WTC11 (cell line): ENCODE measurements at regions of chr4 and their contacts with region 1.

Region 1: GRCh38 chr4:6250235-6250983 is 19.2 kb upstream of the WFS1 start:
- DNase-seq: peak; percentile 43
- ATAC-seq: peak; percentile 70
- H3K4me3 Mint-ChIP-seq: peak overlapping the region; percentile 54
- H3K27ac Mint-ChIP-seq: no peak overlapping the region
- H3K4me1 Mint-ChIP-seq: peaks cover 18% of the 10 kb centered on the region
- H3K27me3 Mint-ChIP-seq: peaks cover 6% of the 10 kb centered on the region
- CTCF ChIP-seq: peak; percentile 80

Region 2: GRCh38 chr4:6013564-6013963 is 236.8 kb before region 1 on chr4:
- CTCF ChIA-PET with region 1: no interaction called
- POLR2A ChIA-PET with region 1: no interaction called
- DNase-seq: no peak
- ATAC-seq: no peak
- H3K4me3 Mint-ChIP-seq: no peak overlapping the region
- H3K27ac Mint-ChIP-seq: no peak overlapping the region
- H3K4me1 Mint-ChIP-seq: peaks cover 12% of the 10 kb centered on the region
- H3K27me3 Mint-ChIP-seq: peaks cover 14% of the 10 kb centered on the region
- CTCF ChIP-seq: no peak

Region 3: GRCh38 chr4:6200011-6200921 is 50.1 kb before region 1 on chr4 and contains the start of gene JAKMIP1:
- CTCF ChIA-PET with region 1: interaction called, 22 read pairs
- POLR2A ChIA-PET with region 1: interaction called, 3 read pairs
- DNase-seq: peak; percentile 93
- ATAC-seq: peak; percentile 50
- H3K4me3 Mint-ChIP-seq: peak within 1 kb of the TSS; percentile 67
- H3K27ac Mint-ChIP-seq: no peak within 1 kb of the TSS
- H3K4me1 Mint-ChIP-seq: peaks cover 37% of the 10 kb centered on the region
- H3K27me3 Mint-ChIP-seq: peaks cover 41% of the 10 kb centered on the region
- CTCF ChIP-seq: no peak
- total RNA-seq, gene JAKMIP1: 4.0 to 5.6 TPM (median 5.4 TPM) in 3 replicates

Region 4: DNA sequence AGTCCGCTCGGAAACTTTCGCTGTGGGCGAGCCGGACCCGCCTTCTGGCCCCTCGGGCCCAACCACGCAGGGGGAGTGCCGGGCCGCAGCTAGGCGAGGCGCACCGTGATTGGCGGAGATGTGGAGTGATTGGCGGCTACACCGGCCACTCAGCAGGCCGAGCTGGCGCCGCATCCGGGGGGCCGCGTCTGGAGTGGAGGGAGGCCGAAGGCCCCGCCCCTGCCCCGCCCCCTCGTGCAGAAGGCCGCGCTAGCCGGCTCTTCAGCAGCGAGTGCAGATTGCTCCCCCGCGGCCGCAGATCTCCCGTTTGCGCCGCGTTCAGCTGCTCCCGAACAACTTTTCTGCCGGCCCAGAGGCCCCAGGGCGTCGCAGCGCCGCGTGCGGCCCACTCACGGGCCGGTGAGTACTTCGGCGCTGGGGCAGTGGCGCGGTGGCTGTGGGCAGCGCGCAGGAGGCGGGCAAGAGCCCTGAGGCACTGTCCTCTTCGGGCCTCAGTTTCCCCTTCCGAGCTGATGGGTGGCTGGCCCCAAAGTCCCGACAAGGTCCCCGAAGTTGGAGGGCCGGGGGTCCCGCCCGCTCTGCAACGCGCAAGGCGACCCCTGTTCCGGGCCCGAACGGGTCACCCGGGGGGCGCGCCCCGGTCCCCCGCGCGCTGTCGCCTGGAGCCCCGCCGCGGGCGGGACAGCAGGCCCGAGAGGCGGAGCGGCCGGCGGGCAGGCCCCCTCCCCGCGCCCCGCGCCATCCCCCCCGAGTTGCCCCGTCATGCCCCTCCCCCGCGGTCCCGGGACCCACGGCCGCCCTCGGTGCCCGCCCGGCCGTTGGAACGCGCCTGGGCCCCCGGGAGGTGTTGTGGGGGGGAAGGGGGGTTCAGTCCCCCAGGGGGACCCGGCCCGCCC is 19.5 kb after region 1 on chr4 and contains the start of gene WFS1:
- CTCF ChIA-PET with region 1: interaction called, 21 read pairs
- POLR2A ChIA-PET with region 1: no interaction called
- DNase-seq: peak; percentile 99
- ATAC-seq: peak; percentile 99
- H3K4me3 Mint-ChIP-seq: peak within 1 kb of the TSS; percentile 81
- H3K27ac Mint-ChIP-seq: no peak within 1 kb of the TSS
- H3K4me1 Mint-ChIP-seq: peaks cover 54% of the 10 kb centered on the region
- H3K27me3 Mint-ChIP-seq: peaks cover 8% of the 10 kb centered on the region
- CTCF ChIP-seq: no peak
- total RNA-seq, gene WFS1: 33.0 to 35.8 TPM (median 34.7 TPM) in 3 replicates

Region 5: GRCh38 chr4:6282314-6282771 is 31.9 kb after region 1 on chr4:
- CTCF ChIA-PET with region 1: interaction called, 12 read pairs
- POLR2A ChIA-PET with region 1: no interaction called
- DNase-seq: no peak
- ATAC-seq: no peak
- H3K4me3 Mint-ChIP-seq: no peak overlapping the region
- H3K27ac Mint-ChIP-seq: peak overlapping the region; percentile 72; the same call in 1 of the 2 replicates
- H3K4me1 Mint-ChIP-seq: no peaks in the 10 kb centered on the region
- H3K27me3 Mint-ChIP-seq: no peaks in the 10 kb centered on the region
- CTCF ChIP-seq: no peak

Region 6: DNA sequence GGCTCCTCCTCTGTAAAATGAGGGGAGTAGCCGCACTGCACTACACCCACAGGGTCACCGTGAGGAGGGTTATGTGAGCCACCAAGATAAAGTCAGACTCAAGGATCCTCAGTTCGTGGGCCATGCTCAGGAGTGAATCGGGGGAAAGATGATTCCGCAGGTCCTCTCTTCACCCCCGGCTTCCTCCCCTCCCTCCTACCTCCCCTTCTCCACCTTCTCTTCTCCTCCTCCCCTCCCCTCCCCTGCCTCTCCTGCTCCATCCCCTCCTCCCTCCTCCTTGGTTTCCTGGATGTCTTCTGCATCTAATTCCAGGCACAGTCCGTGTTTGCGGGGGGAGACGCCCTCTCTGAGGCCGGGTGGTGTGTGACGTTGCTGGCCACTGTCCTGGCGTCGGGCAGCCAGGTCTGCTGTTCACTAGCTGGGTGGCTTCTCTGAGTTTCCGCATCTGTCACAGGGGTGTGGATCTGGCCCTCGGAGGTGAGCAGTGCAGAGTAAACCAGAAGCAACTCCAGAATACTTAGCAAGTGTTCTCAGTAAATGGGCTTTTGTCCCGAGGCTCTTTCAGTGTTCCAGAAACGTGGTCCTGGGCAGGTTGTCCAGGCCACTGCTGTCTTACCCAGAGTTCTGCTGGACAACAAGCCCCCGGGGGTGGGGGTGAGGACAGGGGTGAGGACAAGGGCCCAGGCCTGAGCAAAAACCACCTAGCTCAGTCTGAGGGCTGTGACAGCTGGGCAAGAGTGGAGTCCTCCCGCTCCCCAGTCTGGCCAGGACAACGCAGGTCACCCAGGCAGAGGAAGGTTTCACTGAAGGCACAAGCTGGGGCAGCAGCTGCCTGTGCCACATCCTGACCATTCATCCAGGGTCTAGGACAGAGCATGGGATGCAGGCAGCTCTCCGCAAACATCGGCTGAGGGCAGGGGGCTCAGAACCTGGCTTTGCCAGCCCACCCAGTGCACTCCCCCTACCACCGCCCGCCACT is 129.6 kb after region 1 on chr4:
- CTCF ChIA-PET with region 1: no interaction called
- POLR2A ChIA-PET with region 1: no interaction called
- DNase-seq: no peak
- ATAC-seq: peak; percentile 26
- H3K4me3 Mint-ChIP-seq: no peak overlapping the region
- H3K27ac Mint-ChIP-seq: no peak overlapping the region; the same call in 1 of the 2 replicates
- H3K4me1 Mint-ChIP-seq: peaks cover 14% of the 10 kb centered on the region
- H3K27me3 Mint-ChIP-seq: no peaks in the 10 kb centered on the region; the same call in 1 of the 2 replicates
- CTCF ChIP-seq: no peak